CD8-positive, alpha-beta memory T cell (primary cell): ENCODE measurements at regions of chr22 and their contacts with region 1.

Region 1: DNA sequence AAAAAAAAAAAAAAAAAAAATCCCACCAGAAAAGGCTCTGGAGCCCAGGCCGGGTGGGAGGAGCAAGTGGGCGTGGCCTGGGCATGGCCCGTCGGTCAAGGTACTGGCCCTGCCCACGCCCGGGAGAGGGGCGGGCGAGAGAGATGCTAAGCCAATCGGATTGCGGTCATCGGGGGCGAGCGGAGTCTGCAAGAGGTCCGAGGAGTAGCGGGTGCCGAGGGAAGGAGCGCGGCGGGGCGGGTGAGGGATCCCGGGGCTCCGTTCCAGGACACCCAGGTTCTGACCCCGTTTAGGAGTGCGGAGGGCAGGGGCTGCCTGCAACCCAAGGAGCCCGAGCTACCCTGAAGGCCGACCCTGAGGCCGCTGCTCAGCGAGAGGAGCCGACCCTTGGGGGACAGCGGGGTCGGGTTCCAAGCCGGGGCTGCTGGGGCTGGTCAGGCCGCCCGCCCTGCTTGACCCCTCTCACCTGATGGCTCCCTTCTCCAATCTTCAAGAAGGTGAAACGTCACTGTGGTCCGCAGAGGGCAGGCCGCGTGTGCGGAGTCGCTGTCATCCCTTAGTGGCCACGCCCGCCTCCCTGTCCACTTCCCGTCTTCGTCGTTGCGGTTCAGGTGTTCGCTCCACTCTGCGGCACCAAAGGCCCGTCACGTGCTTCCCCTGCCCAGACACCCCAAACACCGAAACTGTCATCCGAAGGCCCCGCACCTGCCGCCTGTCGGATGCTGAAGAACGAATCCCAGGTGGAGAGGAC is 11.1 kb upstream of the TAB1 start:
- DNase-seq: peak; percentile 74 to 90 (median 83)
- H3K4me3 ChIP-seq: peak overlapping the region; percentile 61
- H3K4me3 Mint-ChIP-seq: peak overlapping the region; percentile 45 to 93 (median 84)
- H3K27ac ChIP-seq: peak overlapping the region; percentile 65
- H3K27ac Mint-ChIP-seq: peak overlapping the region; percentile 63 to 98 (median 87)
- H3K4me1 ChIP-seq: peaks cover 14% of the 10 kb centered on the region
- H3K4me1 Mint-ChIP-seq: peaks cover 13 to 32% (median 15%) of the 10 kb centered on the region in 3 donors
- H3K27me3 ChIP-seq: no peaks in the 10 kb centered on the region
- H3K27me3 Mint-ChIP-seq: no peaks in the 10 kb centered on the region

Region 2: DNA sequence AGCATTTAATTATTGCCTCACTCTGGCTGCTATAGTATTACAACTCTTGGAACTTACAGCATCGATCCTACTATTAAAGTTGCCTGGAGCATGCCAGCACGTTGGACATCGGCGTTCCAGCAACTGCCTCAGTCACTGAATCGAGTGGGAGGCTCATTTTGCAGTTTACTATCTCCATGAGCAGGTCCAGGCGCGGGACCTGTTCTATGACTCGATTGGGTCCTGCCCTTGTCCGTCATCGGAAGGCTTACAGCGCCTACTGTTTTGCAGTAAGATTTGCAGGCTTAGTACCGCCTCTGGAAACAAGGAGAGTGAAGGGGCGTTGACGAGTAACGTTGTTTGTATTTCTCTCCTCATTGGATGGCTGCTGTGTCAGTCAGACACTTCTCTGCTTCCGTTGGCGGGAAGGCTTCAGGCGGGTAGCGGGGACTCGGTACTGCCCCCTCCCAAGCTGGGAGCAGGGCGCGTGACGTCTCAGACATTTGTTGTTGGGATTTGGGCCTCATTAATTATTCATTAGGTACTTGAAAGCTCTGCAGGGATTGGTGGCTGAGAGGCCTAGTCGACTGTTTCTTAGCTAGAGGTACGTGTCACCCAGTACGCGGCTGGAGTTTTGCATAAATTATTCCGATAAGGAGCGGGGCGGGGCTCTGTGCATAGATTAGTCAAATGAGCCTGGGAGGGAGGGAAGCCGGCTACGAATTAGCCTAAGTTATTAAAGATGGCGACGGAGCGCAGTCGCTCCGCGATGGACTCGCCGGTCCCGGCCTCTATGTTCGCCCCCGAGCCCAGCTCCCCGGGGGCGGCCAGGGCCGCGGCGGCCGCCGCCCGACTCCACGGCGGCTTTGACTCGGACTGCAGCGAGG is 683.0 kb before region 1 on chr22 and contains the start of gene GTPBP1:
- CTCF ChIA-PET with region 1: no interaction called
- POLR2A ChIA-PET with region 1: interaction called, 10 read pairs
- DNase-seq: peak; percentile 94 to 99 (median 98)
- H3K4me3 ChIP-seq: peak within 1 kb of the TSS; percentile 82
- H3K4me3 Mint-ChIP-seq: peak within 1 kb of the TSS; percentile 91 to 95 (median 93)
- H3K27ac ChIP-seq: peak within 1 kb of the TSS; percentile 74
- H3K27ac Mint-ChIP-seq: peak within 1 kb of the TSS; percentile 89 to 100 (median 98)
- H3K4me1 ChIP-seq: peaks cover 48% of the 10 kb centered on the region
- H3K4me1 Mint-ChIP-seq: peaks cover 55 to 69% (median 60%) of the 10 kb centered on the region in 3 donors
- H3K27me3 ChIP-seq: no peaks in the 10 kb centered on the region
- H3K27me3 Mint-ChIP-seq: peaks cover 0 to 5% of the 10 kb centered on the region in 2 donors
- total RNA-seq, gene GTPBP1: 62.7 to 63.7 TPM

Region 3: GRCh38 chr22:39292561-39293098 is 95.8 kb before region 1 on chr22:
- CTCF ChIA-PET with region 1: no interaction called
- POLR2A ChIA-PET with region 1: no interaction called
- DNase-seq: no peak
- H3K4me3 ChIP-seq: no peak overlapping the region
- H3K4me3 Mint-ChIP-seq: no peak overlapping the region
- H3K27ac ChIP-seq: no peak overlapping the region
- H3K27ac Mint-ChIP-seq: no peak overlapping the region
- H3K4me1 ChIP-seq: no peaks in the 10 kb centered on the region
- H3K4me1 Mint-ChIP-seq: peaks cover 0 to 1% (median under 1%) of the 10 kb centered on the region in 3 donors
- H3K27me3 ChIP-seq: no peaks in the 10 kb centered on the region
- H3K27me3 Mint-ChIP-seq: peaks cover 7 to 10% of the 10 kb centered on the region in 2 donors

Region 4: GRCh38 chr22:39405346-39406085 is 17.1 kb after region 1 on chr22:
- CTCF ChIA-PET with region 1: interaction called, 15 read pairs
- POLR2A ChIA-PET with region 1: no interaction called
- DNase-seq: no peak
- H3K4me3 ChIP-seq: no peak overlapping the region
- H3K4me3 Mint-ChIP-seq: peak overlapping the region in 1 of 7 donors; percentile 78
- H3K27ac ChIP-seq: no peak overlapping the region
- H3K27ac Mint-ChIP-seq: peak overlapping the region in 1 of 8 donors; percentile 21
- H3K4me1 ChIP-seq: peaks cover 15% of the 10 kb centered on the region
- H3K4me1 Mint-ChIP-seq: peaks cover 30 to 70% (median 62%) of the 10 kb centered on the region in 3 donors
- H3K27me3 ChIP-seq: no peaks in the 10 kb centered on the region
- H3K27me3 Mint-ChIP-seq: no peaks in the 10 kb centered on the region